Natural killer cell (primary cell): ENCODE measurements at regions of chr3 and their contacts with region 1.

Region 1: GRCh38 chr3:184513276-184514170 is 48.1 kb upstream of the EPHB3 start:
- DNase-seq: peak; percentile 76 to 88
- ATAC-seq: peak; percentile 96 to 100 (median 100)
- H3K4me3 ChIP-seq: no peak overlapping the region
- H3K4me3 Mint-ChIP-seq: peak overlapping the region; percentile 59
- H3K27ac ChIP-seq: no peak overlapping the region
- H3K27ac Mint-ChIP-seq: no peak overlapping the region
- H3K4me1 ChIP-seq: peaks cover 10% of the 10 kb centered on the region
- H3K4me1 Mint-ChIP-seq: peaks cover 0 to 17% of the 10 kb centered on the region in 2 donors
- H3K27me3 ChIP-seq: peaks cover 26% of the 10 kb centered on the region
- H3K27me3 Mint-ChIP-seq: peaks cover 46 to 53% of the 10 kb centered on the region in 2 donors
- CTCF ChIP-seq: peak; percentile 85

Region 2: GRCh38 chr3:184354121-184354728 is 159.3 kb before region 1 on chr3:
- intact Hi-C with region 1: loop called (anchors 1 kb)
- DNase-seq: peak; percentile 60 to 80
- ATAC-seq: peak; percentile 71 to 94 (median 83)
- H3K4me3 ChIP-seq: no peak overlapping the region
- H3K4me3 Mint-ChIP-seq: peak overlapping the region; percentile 45
- H3K27ac ChIP-seq: no peak overlapping the region
- H3K27ac Mint-ChIP-seq: peak overlapping the region in 1 of 2 donors; percentile 69
- H3K4me1 ChIP-seq: peaks cover 10% of the 10 kb centered on the region
- H3K4me1 Mint-ChIP-seq: no peaks in the 10 kb centered on the region
- H3K27me3 ChIP-seq: no peaks in the 10 kb centered on the region
- H3K27me3 Mint-ChIP-seq: no peaks in the 10 kb centered on the region
- CTCF ChIP-seq: peak; percentile 68

Region 3: GRCh38 chr3:184371570-184372018 is 141.9 kb before region 1 on chr3:
- intact Hi-C with region 1: loop called (anchors 2 kb)
- DNase-seq: peak in 1 of 2 donors; percentile 79
- ATAC-seq: peak; percentile 77 to 95 (median 90)
- H3K4me3 ChIP-seq: no peak overlapping the region
- H3K4me3 Mint-ChIP-seq: no peak overlapping the region
- H3K27ac ChIP-seq: no peak overlapping the region
- H3K27ac Mint-ChIP-seq: peak overlapping the region in 1 of 2 donors; percentile 35
- H3K4me1 ChIP-seq: no peaks in the 10 kb centered on the region
- H3K4me1 Mint-ChIP-seq: peaks cover 0 to 5% of the 10 kb centered on the region in 2 donors
- H3K27me3 ChIP-seq: no peaks in the 10 kb centered on the region
- H3K27me3 Mint-ChIP-seq: peaks cover 18 to 20% of the 10 kb centered on the region in 2 donors
- CTCF ChIP-seq: peak; percentile 64